ENCODE measurements at regions of chr1 and their contacts with region 1.

Region 1: GRCh38 chr1:54488779-54489626 is 59.0 kb upstream of the ACOT11 start:
- DNase-seq: peak; percentile 60
- H3K4me3 ChIP-seq: peak overlapping the region; percentile 52 to 79 (median 58)
- H3K27ac ChIP-seq: peak overlapping the region; percentile 72
- H3K4me1 ChIP-seq: peaks cover 26% of the 10 kb centered on the region
- H3K27me3 ChIP-seq: no peaks in the 10 kb centered on the region
- CTCF ChIP-seq: peak; percentile 44 to 90

Region 2: DNA sequence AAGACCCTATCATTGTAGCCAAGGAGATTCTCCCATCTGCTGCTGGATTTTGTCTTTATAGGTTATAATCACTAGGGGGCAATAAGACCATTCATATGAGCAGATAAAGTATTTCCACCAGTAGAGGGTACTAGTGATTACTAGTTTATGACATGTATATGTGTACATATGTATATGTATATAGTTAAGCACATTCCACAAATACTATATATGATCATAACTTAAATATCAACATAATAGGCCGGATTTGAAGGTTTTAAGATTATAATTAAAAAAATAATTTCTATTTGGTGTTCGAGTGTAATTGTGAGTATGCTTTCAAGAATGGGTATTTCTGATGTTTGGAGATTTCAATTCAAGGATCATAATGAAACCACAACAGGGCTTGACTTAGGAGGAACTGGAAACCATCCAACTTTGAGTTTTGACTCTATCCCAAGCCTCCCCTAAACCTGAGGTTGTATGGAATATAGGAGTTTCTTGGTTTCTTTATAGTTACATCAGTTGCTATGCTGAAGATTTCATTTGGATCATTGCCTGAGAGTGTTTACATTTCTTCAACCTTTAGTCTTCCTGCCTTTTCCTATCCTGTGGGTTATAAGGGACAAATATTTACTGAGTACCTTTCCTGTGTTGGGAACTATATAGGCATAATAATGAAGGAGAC is 418.7 kb before region 1 on chr1:
- CTCF ChIA-PET with region 1: interaction called, 6 read pairs
- dilution Hi-C with region 1: no loop called
- in situ Hi-C with region 1: no loop called
- intact Hi-C with region 1: loop called (anchors 1 kb)
- DNase-seq: peak; percentile 28
- H3K4me3 ChIP-seq: no peak overlapping the region
- H3K27ac ChIP-seq: no peak overlapping the region
- H3K4me1 ChIP-seq: no peaks in the 10 kb centered on the region
- H3K27me3 ChIP-seq: no peaks in the 10 kb centered on the region
- CTCF ChIP-seq: peak; percentile 76 to 79

Region 3: DNA sequence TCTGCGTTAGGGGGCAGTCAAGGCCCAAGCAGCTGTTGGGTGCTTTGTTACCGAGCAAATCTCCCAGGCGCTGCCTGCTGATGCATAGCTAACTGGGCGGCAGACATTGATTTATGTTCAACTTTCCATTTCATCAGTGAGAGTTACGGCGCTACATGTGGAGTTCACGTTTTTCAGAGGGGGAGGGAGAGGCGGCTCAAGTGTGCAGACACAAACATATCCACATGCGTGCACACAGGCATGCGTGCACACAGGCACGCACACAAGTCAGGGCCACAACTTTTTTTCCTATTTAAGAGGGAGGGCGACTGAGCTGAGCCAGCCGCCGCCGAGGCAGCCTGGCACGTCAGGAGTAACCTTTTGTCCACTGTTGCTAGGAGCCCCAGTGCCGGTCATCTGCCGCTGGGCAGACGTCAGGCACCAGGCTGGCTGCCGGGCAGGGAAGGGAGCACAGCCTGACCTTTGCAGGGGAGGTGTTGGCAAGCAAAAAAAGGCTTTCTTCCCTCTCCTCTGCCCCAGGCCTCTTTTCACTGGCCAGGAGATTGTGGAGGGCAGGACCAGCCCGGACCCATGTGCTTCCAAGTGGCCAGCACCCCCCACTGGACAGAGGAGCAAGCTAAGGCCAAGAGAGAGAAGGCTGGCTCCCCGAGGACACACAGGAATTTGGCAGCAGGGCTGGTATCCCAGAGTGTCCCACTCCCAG is 215.8 kb before region 1 on chr1:
- CTCF ChIA-PET with region 1: interaction called, 8 read pairs
- dilution Hi-C with region 1: no loop called
- in situ Hi-C with region 1: no loop called
- intact Hi-C with region 1: loop called (anchors 2 kb)
- DNase-seq: no peak
- H3K4me3 ChIP-seq: no peak overlapping the region
- H3K27ac ChIP-seq: no peak overlapping the region
- H3K4me1 ChIP-seq: peaks cover 20% of the 10 kb centered on the region
- H3K27me3 ChIP-seq: no peaks in the 10 kb centered on the region
- CTCF ChIP-seq: no peak

Region 4: DNA sequence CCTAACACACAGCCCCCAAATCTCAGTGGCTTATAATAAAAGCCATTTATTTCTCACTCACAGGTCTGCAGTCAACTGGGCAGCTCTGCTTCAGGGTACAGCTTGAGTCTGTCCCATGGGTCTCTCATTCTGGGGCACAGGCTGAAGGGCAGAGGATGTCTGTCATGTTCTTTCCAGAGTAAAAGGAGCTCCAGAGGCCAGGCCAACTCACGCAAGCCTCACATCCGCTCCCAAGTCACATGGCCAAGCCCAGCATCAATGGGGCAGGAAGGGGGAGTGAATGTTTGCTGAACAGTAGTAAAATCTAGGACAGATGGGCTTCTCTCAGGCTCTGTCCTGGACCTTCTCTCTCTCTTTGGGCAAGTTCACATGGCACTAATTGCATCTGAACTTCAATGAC is 75.7 kb before region 1 on chr1:
- CTCF ChIA-PET with region 1: no interaction called
- dilution Hi-C with region 1: loop called (anchors 5 kb)
- in situ Hi-C with region 1: loop called (anchors 5 kb)
- intact Hi-C with region 1: no loop called
- DNase-seq: no peak
- H3K4me3 ChIP-seq: no peak overlapping the region
- H3K27ac ChIP-seq: no peak overlapping the region
- H3K4me1 ChIP-seq: peaks cover 12% of the 10 kb centered on the region
- H3K27me3 ChIP-seq: no peaks in the 10 kb centered on the region
- CTCF ChIP-seq: no peak

Region 5: GRCh38 chr1:54791880-54792522 is 303.0 kb after region 1 on chr1:
- CTCF ChIA-PET with region 1: interaction called, 13 read pairs
- dilution Hi-C with region 1: no loop called
- in situ Hi-C with region 1: no loop called
- intact Hi-C with region 1: no loop called
- DNase-seq: no peak
- H3K4me3 ChIP-seq: no peak overlapping the region
- H3K27ac ChIP-seq: no peak overlapping the region
- H3K4me1 ChIP-seq: peaks cover 17% of the 10 kb centered on the region
- H3K27me3 ChIP-seq: no peaks in the 10 kb centered on the region
- CTCF ChIP-seq: peak; percentile 62 to 82